Activated T-helper 1 cell treated with anti-CD3 and anti-CD28 coated beads, Interleukin-12 subunit alpha, Interleukin-12 subunit beta, Interleukin-2, Interleukin-4 antibody, amounts not matched to agents 30 ng/mL and 10 ng/mL and 1 ng/mL, durations not matched to agents 14 hours and 24 hours and 36 hours (primary cell): ENCODE measurements at regions of chr18 and their contacts with region 1.

Region 1: DNA sequence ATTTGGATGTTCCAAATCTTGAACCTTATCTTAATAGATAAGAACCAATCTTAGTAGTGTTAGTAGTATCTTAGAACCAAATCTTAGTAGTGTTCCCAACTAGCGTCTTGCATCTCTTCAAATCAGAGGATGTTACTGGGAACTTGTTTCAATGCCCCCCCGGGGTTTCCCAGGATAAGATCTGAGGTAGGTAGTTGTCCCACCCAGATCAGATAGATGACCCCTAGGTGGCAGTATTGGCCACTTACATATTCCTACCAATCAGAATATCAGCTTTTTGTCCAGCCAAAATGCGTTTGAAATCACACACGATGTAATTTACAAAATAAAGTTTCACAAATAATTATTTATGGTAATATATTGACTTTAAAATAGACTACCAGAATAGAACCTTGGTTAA is 314.8 kb downstream of the MBD2 start:
- DNase-seq: no peak
- H3K4me3 Mint-ChIP-seq: no peak overlapping the region
- H3K27ac Mint-ChIP-seq: no peak overlapping the region
- H3K4me1 Mint-ChIP-seq: no peaks in the 10 kb centered on the region
- H3K27me3 Mint-ChIP-seq: peaks cover 5% of the 10 kb centered on the region

Region 2: DNA sequence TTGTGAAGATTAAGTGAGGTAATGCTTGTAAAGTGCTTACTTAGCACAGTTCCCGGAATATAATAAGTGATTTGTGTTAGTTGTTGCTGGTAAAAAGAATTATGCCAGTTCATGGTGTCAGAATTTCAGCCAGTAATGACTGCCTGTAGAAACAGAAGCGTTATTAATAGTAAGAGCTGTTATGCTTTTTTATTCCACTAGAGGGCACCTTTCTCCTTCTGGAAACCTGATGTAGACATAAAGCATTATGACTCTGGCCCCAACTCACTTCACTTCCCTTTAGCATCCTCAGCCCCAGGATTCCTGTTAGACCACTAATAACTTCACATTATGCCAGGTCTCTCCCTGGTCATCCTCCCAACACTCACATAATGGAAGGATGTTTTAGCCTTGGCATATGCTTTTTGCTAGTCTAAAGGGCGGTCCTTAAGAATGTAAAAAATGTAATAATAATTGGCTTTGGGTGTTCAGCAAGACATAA is 482.9 kb after region 1 on chr18:
- intact Hi-C with region 1: loop called (anchors 2 kb)
- DNase-seq: no peak
- H3K4me3 Mint-ChIP-seq: no peak overlapping the region
- H3K27ac Mint-ChIP-seq: no peak overlapping the region
- H3K4me1 Mint-ChIP-seq: peaks cover 43% of the 10 kb centered on the region
- H3K27me3 Mint-ChIP-seq: peaks cover 3% of the 10 kb centered on the region